Upper lobe of right lung (tissue), 1 donor: ENCODE measurements at regions of chr5 and their contacts with region 1.

Region 1: DNA sequence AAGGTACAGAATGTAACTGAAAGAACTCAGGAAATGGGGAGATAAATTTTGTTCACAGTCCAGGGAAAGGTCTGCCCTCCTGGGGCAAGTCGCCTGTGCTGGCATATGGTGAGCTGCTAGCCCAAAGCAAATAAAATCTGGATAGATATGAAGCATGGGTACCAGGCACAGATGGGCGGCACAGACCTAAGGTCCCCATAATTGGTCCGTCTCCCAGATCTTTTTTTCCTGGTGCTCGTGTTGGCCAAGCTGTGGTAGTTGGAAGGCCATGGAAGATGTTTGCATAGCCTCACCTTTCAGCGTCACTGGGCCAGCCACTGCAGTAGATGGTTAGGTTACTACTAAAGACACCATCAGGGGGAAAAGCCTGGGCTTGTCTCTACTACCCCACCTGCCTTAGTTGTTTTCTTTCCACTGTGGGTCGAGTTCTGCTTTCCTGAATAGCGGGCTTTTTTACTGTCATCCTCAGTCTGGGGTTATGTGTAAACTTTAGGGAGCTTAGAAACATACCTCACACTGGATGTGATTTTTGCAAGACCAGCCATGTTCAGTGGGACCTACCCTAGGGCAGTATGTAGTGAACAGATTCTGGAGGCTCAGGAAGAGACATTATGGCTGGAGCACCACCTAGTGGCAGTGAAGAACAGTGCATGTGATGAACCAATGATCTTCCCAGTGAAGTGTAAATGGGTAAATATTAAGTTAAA is 24.2 kb upstream of the GLRX start:
- DNase-seq: no peak
- ATAC-seq: peak; percentile 83
- H3K4me3 ChIP-seq: no peak overlapping the region
- H3K27ac ChIP-seq: no peak overlapping the region
- H3K4me1 ChIP-seq: peaks cover 29% of the 10 kb centered on the region
- H3K27me3 ChIP-seq: no peaks in the 10 kb centered on the region
- CTCF ChIP-seq: peak; percentile 94

Region 2: DNA sequence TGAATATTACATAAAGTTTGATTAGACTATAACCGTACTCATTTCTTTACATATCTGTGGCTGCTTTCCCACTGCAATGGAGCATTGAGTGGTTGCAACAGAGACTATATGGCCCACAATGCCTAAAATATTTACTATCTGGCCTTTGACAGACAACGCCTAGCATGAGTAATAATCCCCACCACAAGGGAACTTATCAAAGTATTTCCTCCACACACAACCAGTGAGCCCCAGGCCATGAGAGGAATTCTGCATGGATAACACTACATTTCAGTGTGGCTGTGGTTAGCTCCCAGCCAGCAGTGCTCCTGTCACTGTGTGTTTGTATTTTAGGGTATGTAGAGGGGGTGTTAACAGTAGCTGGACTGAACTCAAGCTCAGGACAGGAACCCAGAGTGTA is 400.7 kb before region 1 on chr5:
- intact Hi-C with region 1: no loop called
- DNase-seq: no peak
- ATAC-seq: no peak
- H3K4me3 ChIP-seq: no peak overlapping the region
- H3K27ac ChIP-seq: no peak overlapping the region
- H3K4me1 ChIP-seq: no peaks in the 10 kb centered on the region
- H3K27me3 ChIP-seq: no peaks in the 10 kb centered on the region
- CTCF ChIP-seq: no peak

Region 3: DNA sequence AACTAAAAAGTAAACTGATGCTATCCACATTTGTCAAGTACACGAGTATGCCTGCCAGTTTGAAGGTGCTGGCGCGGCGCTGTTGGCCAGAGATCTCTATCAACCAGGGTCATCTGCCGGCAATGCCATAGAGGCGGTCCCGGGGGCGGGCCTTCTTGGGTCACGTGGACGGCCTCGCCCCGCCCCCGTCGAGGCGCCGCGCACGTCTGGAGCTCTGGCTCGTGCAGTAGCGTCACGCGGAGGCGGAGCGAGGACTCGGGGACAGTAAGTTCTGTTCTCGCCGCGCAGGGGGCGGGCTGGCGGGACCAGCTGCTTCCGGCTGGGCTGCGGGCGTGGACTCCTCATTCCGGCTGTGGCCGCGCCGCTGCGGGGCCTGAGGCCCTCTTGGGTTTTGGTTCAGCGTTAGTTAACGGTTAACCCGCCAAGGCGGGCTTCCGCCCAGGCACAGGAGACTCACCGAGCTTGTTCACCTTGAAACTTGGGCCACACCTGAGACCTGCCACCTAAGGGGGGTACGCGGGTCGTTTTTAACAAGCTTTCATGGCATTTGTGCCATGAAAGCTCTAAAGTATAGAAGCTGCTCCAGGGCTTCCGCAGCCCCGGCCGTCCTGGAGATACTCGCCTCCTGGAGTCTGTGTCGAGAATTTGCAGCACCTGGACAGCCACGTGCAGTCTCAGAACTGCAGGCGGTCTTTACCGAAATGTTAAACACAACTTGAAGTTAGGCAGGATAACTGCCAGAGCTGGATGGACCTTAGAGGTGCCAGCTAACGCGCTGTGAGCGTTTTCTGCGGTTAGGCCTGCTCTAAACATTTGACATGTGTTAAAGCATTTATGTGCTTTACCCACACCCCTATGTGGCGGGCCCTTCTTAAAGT is 199.9 kb before region 1 on chr5 and contains the start of gene RFESD:
- intact Hi-C with region 1: loop called (anchors 10 kb)
- DNase-seq: peak; percentile 100
- ATAC-seq: peak; percentile 98
- H3K4me3 ChIP-seq: peak within 1 kb of the TSS; percentile 56
- H3K27ac ChIP-seq: peak within 1 kb of the TSS; percentile 97
- H3K4me1 ChIP-seq: peaks cover 8% of the 10 kb centered on the region
- H3K27me3 ChIP-seq: no peaks in the 10 kb centered on the region
- CTCF ChIP-seq: no peak
- total RNA-seq, gene RFESD: 3.7 TPM

Region 4: DNA sequence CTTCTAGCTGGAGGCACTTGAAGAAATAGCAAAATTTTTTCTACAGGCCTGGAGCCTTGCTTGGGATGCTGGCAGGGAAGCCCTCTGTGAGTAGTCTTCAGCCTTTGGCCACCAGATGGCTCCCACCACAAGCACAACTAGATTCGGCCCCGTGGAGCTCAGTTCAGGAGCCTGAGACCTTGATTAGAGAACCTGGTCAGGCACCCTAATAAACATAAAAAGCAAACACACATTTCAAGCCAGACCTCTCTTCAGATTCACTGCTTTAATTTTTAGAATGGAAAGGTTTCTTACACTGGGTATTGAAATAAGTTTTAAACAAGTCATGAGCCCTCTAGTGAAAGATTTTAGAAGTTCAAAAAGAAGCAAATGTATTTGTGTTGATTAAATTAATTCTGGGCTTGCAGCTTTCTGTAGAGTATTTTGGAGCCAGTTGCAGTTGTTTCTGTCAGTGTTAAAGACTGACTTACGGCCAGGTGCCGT is 65.6 kb before region 1 on chr5:
- intact Hi-C with region 1: loop called (anchors 5 kb)
- DNase-seq: peak; percentile 81
- ATAC-seq: peak; percentile 99
- H3K4me3 ChIP-seq: no peak overlapping the region
- H3K27ac ChIP-seq: no peak overlapping the region
- H3K4me1 ChIP-seq: peaks cover 20% of the 10 kb centered on the region
- H3K27me3 ChIP-seq: no peaks in the 10 kb centered on the region
- CTCF ChIP-seq: peak; percentile 92